ENCODE measurements at regions of chr18 and their contacts with region 1.

Region 1: DNA sequence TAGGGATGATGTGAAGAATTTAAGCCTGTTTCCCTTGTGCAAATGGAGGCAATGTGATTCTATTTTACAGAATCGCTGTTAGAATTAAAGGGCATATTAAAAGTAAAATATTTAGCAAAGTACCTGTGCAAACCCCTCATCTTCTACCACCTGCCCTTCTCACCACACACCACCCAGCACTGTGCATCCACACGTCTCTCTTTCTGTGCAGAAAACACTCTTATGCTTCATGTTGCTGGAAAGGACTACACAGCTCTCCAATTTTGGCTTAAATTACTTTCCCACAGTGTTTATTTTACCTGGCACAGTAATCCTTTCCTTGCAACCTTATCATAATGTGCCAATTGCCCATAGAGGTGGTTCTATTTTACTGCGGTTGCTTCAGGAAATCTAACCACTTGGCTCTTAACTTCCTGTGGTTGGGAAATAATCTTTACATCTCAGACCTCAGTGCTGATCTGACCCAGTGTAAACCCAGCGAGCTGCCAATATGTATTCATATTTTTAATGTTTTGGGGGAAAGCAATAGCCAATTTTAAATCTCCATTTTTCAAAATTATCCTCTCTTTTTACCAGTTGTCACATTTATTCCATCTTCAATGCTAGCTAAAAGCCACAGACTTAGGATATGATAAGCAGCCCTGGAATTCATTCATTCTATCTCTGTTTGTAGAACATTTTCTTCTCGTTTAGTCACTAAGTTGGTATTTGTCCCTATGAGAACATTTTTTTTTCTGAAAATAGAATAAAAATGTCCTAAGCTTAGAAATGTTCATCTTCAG is 250.9 kb downstream of the DSEL start:
- DNase-seq: peak; percentile 79
- ATAC-seq: peak; percentile 84
- H3K4me3 ChIP-seq: no peak overlapping the region
- H3K27ac ChIP-seq: peak overlapping the region; percentile 80
- H3K4me1 ChIP-seq: peaks cover 15% of the 10 kb centered on the region
- H3K27me3 ChIP-seq: no peaks in the 10 kb centered on the region
- CTCF ChIP-seq: no peak
- POLR2A ChIP-seq: no peak
- RAD21 ChIP-seq: no peak

Region 2: GRCh38 chr18:67292814-67293213 is 27.2 kb after region 1 on chr18:
- CTCF ChIA-PET with region 1: no interaction called
- POLR2A ChIA-PET with region 1: no interaction called
- dilution Hi-C with region 1: no loop called
- in situ Hi-C with region 1: no loop called
- intact Hi-C with region 1: loop called (anchors 2 kb)
- DNase-seq: no peak
- ATAC-seq: no peak
- H3K4me3 ChIP-seq: no peak overlapping the region
- H3K27ac ChIP-seq: no peak overlapping the region
- H3K4me1 ChIP-seq: no peaks in the 10 kb centered on the region
- H3K27me3 ChIP-seq: no peaks in the 10 kb centered on the region
- CTCF ChIP-seq: no peak
- POLR2A ChIP-seq: no peak
- RAD21 ChIP-seq: no peak

Region 3: GRCh38 chr18:67359873-67360838 is 94.5 kb after region 1 on chr18:
- CTCF ChIA-PET with region 1: no interaction called
- POLR2A ChIA-PET with region 1: no interaction called
- dilution Hi-C with region 1: no loop called
- in situ Hi-C with region 1: no loop called
- intact Hi-C with region 1: loop called (anchors 10 kb)
- DNase-seq: peak; percentile 96
- ATAC-seq: peak; percentile 97
- H3K4me3 ChIP-seq: peak overlapping the region; percentile 37; the same call in 1 of the 2 replicates
- H3K27ac ChIP-seq: no peak overlapping the region
- H3K4me1 ChIP-seq: peaks cover 3% of the 10 kb centered on the region; the same call in 1 of the 2 replicates
- H3K27me3 ChIP-seq: no peaks in the 10 kb centered on the region
- CTCF ChIP-seq: no peak
- POLR2A ChIP-seq: no peak
- RAD21 ChIP-seq: no peak; the same call in 1 of the 2 replicates

Measured in IMR-90 (cell line).